Panc1 (cell line): ENCODE measurements at regions of chr7 and their contacts with region 1.

Region 1: DNA sequence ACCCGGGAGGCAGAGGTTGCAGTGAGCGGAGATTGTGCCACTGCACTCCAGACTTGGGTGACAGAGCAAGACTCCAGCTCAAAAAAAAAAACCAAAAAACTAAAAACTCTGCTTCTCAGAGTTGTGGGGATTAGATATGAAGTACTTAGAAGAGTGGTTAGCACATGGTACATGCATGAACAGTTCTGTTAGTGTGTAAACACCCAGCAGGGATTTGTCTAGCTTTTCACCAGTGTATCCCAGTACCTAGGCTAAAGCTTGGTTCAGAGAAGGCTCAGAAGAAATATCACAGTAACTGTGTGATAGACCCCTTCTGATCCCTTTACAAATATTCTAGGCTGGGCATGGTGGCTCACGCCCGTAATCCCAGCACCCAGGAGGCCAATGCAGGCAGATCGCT is 9.5 kb downstream of the PPIA start:
- DNase-seq: no peak
- ATAC-seq: peak; percentile 15
- H3K4me3 ChIP-seq: no peak overlapping the region
- H3K27ac ChIP-seq: no peak overlapping the region
- H3K4me1 ChIP-seq: peaks cover 12% of the 10 kb centered on the region
- H3K27me3 ChIP-seq: no peaks in the 10 kb centered on the region
- CTCF ChIP-seq: no peak

Region 2: DNA sequence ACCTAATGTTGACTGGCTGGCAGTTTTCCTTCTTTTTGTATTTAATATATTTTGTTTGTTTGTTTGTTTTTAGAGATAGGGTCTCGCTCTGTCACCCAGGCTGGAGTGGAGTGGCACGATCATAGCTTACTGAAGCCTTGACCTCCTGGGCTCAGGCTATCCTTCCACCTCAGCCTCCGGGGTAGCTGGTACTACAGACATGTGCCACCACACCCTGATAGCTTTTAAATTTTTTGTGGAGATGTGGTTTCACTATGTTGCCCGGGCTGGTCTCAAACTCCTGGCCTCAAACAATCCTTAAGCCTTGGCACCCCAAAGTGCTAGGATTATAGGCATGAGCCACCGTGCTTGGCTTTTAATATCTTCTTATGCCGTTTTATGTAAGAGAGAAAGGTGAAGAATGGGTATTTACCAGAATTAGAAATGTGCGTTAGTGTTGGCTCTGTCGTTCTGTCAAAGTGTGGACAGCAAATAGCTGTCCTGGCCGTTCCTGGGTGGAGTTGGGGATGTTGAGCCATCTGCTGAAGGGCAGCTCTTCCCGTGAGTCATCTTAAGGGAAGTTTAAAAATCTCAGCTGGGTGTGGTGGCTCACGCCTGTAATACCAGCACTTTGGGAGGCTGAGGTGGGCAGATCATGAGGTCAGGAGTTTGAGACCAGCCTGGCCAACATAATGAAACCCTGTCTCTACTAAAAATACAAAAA is 184.8 kb before region 1 on chr7:
- CTCF ChIA-PET with region 1: interaction called, 6 read pairs
- POLR2A ChIA-PET with region 1: interaction called, 14 read pairs
- in situ Hi-C with region 1: no loop called
- intact Hi-C with region 1: no loop called
- DNase-seq: no peak
- ATAC-seq: peak; percentile 68
- H3K4me3 ChIP-seq: peak overlapping the region in 1 of 2 experiments; percentile 19; a peak in 1 of 4 replicates
- H3K27ac ChIP-seq: peak overlapping the region; percentile 73
- H3K4me1 ChIP-seq: peaks cover 55% of the 10 kb centered on the region
- H3K27me3 ChIP-seq: no peaks in the 10 kb centered on the region
- CTCF ChIP-seq: no peak

Region 3: GRCh38 chr7:44693721-44694285 is 112.1 kb before region 1 on chr7:
- CTCF ChIA-PET with region 1: no interaction called
- POLR2A ChIA-PET with region 1: interaction called, 19 read pairs
- in situ Hi-C with region 1: no loop called
- intact Hi-C with region 1: no loop called
- DNase-seq: no peak
- ATAC-seq: no peak
- H3K4me3 ChIP-seq: no peak overlapping the region
- H3K27ac ChIP-seq: no peak overlapping the region
- H3K4me1 ChIP-seq: no peaks in the 10 kb centered on the region
- H3K27me3 ChIP-seq: no peaks in the 10 kb centered on the region
- CTCF ChIP-seq: no peak

Region 4: GRCh38 chr7:44986218-44987053 is 180.5 kb after region 1 on chr7:
- CTCF ChIA-PET with region 1: interaction called, 3 read pairs
- POLR2A ChIA-PET with region 1: interaction called, 13 read pairs
- in situ Hi-C with region 1: no loop called
- intact Hi-C with region 1: no loop called
- DNase-seq: peak; percentile 86
- ATAC-seq: peak; percentile 99
- H3K4me3 ChIP-seq: peak overlapping the region; percentile 82 to 84
- H3K27ac ChIP-seq: peak overlapping the region; percentile 96
- H3K4me1 ChIP-seq: peaks cover 27% of the 10 kb centered on the region
- H3K27me3 ChIP-seq: no peaks in the 10 kb centered on the region
- CTCF ChIP-seq: no peak